A673 (cell line): ENCODE measurements at regions of chr2 and their contacts with region 1.

Region 1: GRCh38 chr2:224101820-224102630 is 62.9 kb upstream of the SERPINE2 start:
- DNase-seq: peak; percentile 92
- H3K4me3 ChIP-seq: no peak overlapping the region
- H3K27ac ChIP-seq: peak overlapping the region; percentile 76
- H3K4me1 ChIP-seq: peaks cover 47% of the 10 kb centered on the region
- H3K27me3 ChIP-seq: no peaks in the 10 kb centered on the region
- CTCF ChIP-seq: no peak

Region 2: GRCh38 chr2:223744573-223744972 is 357.5 kb before region 1 on chr2:
- CTCF ChIA-PET with region 1: no interaction called
- POLR2A ChIA-PET with region 1: no interaction called
- intact Hi-C with region 1: no loop called
- DNase-seq: no peak
- H3K4me3 ChIP-seq: no peak overlapping the region
- H3K27ac ChIP-seq: peak overlapping the region; percentile 96
- H3K4me1 ChIP-seq: peaks cover 48% of the 10 kb centered on the region
- H3K27me3 ChIP-seq: no peaks in the 10 kb centered on the region
- CTCF ChIP-seq: no peak

Region 3: DNA sequence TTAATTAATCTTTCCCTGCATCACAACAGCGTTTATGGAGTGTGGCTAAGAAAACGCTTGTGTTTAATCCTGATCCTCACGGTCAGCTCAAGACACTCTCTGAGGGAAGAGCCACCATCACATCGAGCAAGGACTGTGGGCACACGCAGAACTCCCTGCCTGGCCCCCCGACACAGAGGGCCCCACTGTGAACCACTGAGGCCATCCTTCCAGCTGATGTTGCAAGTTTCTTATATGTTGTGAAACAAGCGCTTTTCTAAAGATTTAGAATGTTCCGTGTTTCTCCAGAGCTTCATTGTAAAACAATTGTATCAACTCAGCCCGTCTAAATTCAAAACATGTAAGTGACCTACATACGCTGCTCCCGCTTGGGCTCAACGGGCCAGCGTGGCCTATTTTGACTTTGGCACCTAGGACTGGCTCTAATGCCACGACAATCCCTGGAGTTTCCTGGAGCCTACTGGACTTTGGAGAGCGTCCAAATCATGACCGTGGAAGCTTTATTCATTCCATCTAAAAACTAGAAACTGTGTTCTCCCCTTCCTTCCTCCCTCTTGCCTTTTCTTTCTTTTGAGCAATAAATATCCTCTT is 97.8 kb before region 1 on chr2:
- CTCF ChIA-PET with region 1: no interaction called
- POLR2A ChIA-PET with region 1: no interaction called
- intact Hi-C with region 1: no loop called
- DNase-seq: no peak
- H3K4me3 ChIP-seq: no peak overlapping the region
- H3K27ac ChIP-seq: peak overlapping the region; percentile 40
- H3K4me1 ChIP-seq: peaks cover 44% of the 10 kb centered on the region
- H3K27me3 ChIP-seq: no peaks in the 10 kb centered on the region
- CTCF ChIP-seq: no peak

Region 4: DNA sequence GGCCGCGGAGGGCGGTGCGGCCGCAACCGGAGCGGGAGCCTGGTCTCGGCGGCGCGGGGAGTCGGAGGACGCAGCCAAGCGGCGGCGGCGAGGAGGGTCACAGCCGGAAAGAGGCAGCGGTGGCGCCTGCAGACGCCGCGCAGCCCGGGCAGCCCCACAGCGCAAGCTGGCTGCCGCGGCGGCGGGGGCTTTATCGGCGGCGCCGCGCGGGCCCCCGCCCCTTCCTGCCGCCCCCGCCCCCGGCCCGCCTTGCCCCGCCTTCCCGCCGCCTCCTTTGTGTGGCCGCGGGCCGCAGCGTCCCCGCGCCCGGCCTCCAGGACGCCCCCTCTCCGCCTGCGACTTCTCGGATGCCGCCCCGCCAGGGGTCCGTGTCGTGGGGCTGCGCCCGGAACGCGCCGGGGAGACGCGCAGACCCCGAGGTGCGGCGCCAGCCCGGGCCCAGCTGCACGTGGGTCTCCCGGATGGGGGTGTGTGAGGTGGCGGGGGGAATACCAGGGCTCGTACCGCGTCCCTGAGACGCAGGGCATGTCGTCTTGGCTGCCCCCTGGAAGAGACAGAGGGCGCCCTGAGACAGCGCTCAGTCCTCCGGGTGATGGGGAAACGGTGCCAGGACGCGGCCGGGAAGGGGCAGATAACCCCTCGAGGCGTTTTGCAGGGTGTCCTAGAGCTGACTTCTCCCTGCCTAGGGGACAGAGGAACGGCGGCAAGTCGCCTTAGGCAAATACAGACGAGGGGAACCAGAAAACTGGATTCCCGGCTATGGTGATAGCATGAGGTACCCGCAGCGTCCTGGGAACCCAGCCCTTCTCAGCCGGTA is 62.7 kb before region 1 on chr2 and contains the start of gene SERPINE2:
- CTCF ChIA-PET with region 1: no interaction called
- POLR2A ChIA-PET with region 1: interaction called, 8 read pairs
- intact Hi-C with region 1: loop called (anchors 5 kb)
- DNase-seq: peak; percentile 89
- H3K4me3 ChIP-seq: peak within 1 kb of the TSS; percentile 87
- H3K27ac ChIP-seq: peak within 1 kb of the TSS; percentile 68
- H3K4me1 ChIP-seq: peaks cover 45% of the 10 kb centered on the region
- H3K27me3 ChIP-seq: no peaks in the 10 kb centered on the region
- CTCF ChIP-seq: peak; percentile 52
- total RNA-seq, gene SERPINE2: 331 and 380 TPM in 2 replicates

Region 5: DNA sequence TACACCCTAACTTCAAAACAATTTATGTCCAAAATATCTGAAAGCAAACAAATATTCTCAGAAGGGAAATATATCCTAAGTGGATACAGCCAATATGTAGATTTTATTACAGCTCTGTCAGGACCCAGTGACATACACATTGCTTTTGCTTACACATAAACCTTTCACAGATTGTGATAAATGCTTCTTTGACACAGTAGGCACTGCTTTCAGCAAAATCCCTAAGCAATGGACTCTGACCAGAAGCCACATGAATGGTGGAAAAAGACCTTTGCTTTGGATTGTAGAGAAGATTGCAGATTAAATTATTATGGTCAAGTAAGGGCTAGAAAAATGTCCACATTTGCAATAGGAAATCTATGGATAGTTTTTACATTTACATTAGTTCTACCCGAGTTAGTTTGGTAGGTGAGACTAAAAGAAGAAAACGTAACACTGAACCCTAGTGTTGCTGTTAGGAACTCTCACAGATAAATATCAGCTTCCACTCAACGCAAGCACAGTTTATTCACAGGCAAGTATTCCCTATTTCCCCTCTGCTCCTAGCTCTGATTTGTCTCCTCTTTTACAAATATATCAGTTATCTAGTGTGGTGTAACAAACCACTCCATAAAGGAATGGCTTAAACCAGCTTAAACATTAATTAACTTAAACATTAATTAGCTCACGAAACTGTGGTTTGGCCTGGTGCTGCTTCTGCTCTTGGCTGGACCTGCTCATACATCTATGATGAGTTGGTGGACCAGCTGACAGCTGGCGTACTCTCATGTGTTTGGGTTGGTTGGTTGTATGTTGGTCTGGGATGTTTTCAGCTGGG is 39.3 kb before region 1 on chr2:
- CTCF ChIA-PET with region 1: no interaction called
- POLR2A ChIA-PET with region 1: no interaction called
- intact Hi-C with region 1: no loop called
- DNase-seq: no peak
- H3K4me3 ChIP-seq: no peak overlapping the region
- H3K27ac ChIP-seq: peak overlapping the region; percentile 2
- H3K4me1 ChIP-seq: peaks cover 18% of the 10 kb centered on the region
- H3K27me3 ChIP-seq: no peaks in the 10 kb centered on the region
- CTCF ChIP-seq: peak; percentile 48